Caco-2 (cell line): ENCODE measurements at regions of chr20 and their contacts with region 1.

Region 1: GRCh38 chr20:40689943-40690835 is 1.2 kb upstream of the MAFB start:
- DNase-seq: peak; percentile 92 to 96
- H3K4me3 ChIP-seq: peak overlapping the region; percentile 68
- H3K4me3 Mint-ChIP-seq: peak overlapping the region; percentile 81
- H3K27ac Mint-ChIP-seq: peak overlapping the region; percentile 38
- H3K4me1 ChIP-seq: peaks cover 14% of the 10 kb centered on the region
- H3K4me1 Mint-ChIP-seq: no peaks in the 10 kb centered on the region
- H3K27me3 ChIP-seq: peaks cover 14% of the 10 kb centered on the region
- H3K27me3 Mint-ChIP-seq: peaks cover 47% of the 10 kb centered on the region
- CTCF ChIP-seq: peak; percentile 99

Region 2: DNA sequence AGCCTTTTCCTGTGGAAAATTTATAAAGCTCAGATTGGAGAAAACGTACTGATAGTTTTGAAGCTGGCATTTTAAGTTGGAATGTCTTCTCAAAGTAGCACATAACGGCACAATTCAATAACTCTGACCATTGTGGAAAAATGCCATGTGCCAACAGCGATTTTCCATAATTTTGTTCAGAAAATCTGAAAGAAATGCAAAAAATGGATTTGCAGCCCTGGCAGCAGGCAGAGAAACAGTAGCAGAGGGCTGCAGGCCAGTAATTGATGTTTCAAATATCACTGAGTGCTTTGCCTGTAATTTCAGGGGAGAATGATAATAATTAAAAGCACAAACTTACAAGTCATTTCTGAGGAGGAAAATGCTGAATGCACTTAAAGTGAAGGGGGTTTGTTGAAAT is 508.5 kb before region 1 on chr20:
- CTCF ChIA-PET with region 1: no interaction called
- POLR2A ChIA-PET with region 1: no interaction called
- intact Hi-C with region 1: no loop called
- DNase-seq: no peak
- H3K4me3 ChIP-seq: no peak overlapping the region
- H3K4me3 Mint-ChIP-seq: no peak overlapping the region
- H3K27ac Mint-ChIP-seq: no peak overlapping the region
- H3K4me1 ChIP-seq: no peaks in the 10 kb centered on the region
- H3K4me1 Mint-ChIP-seq: no peaks in the 10 kb centered on the region
- H3K27me3 ChIP-seq: no peaks in the 10 kb centered on the region
- H3K27me3 Mint-ChIP-seq: peaks cover 9% of the 10 kb centered on the region
- CTCF ChIP-seq: no peak

Region 3: DNA sequence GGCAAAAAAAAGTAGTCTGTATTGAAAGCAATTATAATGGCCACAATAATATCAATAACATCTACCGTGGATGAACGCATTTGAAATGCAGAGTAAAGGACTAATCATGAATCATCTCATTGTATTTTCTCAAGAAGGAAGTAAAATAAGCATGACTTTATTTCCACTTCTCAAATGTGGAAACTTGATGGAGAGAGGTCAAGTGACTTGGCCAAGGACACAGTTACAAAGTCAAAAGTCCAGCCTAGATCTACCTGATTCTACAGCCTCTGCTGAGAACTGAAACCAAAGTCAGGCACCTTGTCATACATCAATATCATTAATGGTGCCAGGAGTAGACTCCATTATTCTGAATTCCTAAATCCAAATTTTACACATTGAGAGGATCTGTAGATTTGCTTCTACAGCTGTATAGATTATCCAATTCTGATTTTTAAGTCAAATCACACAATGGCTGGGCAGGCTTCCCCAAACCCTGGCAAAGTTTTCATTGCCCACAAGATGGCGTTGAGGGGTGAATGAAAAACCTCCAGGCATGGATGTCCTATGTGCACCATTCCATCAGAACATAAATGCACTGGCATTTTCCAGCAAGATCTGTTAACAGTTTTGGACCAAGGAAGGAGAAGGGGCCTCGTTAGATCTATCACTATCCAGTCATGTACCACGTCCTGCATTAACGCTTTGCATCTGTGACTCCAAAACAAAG is 424.2 kb before region 1 on chr20:
- CTCF ChIA-PET with region 1: interaction called, 3 read pairs
- POLR2A ChIA-PET with region 1: no interaction called
- intact Hi-C with region 1: loop called (anchors 1 kb)
- DNase-seq: peak in 1 of 2 experiments; percentile 66
- H3K4me3 ChIP-seq: no peak overlapping the region
- H3K4me3 Mint-ChIP-seq: no peak overlapping the region
- H3K27ac Mint-ChIP-seq: no peak overlapping the region
- H3K4me1 ChIP-seq: no peaks in the 10 kb centered on the region
- H3K4me1 Mint-ChIP-seq: no peaks in the 10 kb centered on the region
- H3K27me3 ChIP-seq: peaks cover 2% of the 10 kb centered on the region
- H3K27me3 Mint-ChIP-seq: peaks cover 21% of the 10 kb centered on the region
- CTCF ChIP-seq: peak; percentile 72 to 81

Region 4: GRCh38 chr20:40617594-40617993 is 72.6 kb before region 1 on chr20:
- CTCF ChIA-PET with region 1: no interaction called
- POLR2A ChIA-PET with region 1: no interaction called
- intact Hi-C with region 1: loop called (anchors 1 kb)
- DNase-seq: no peak
- H3K4me3 ChIP-seq: no peak overlapping the region
- H3K4me3 Mint-ChIP-seq: peak overlapping the region; percentile 7
- H3K27ac Mint-ChIP-seq: no peak overlapping the region
- H3K4me1 ChIP-seq: peaks cover 4% of the 10 kb centered on the region; the same call in 1 of the 2 replicates
- H3K4me1 Mint-ChIP-seq: no peaks in the 10 kb centered on the region
- H3K27me3 ChIP-seq: no peaks in the 10 kb centered on the region; the same call in 1 of the 2 replicates
- H3K27me3 Mint-ChIP-seq: peaks cover 14% of the 10 kb centered on the region
- CTCF ChIP-seq: no peak

Region 5: DNA sequence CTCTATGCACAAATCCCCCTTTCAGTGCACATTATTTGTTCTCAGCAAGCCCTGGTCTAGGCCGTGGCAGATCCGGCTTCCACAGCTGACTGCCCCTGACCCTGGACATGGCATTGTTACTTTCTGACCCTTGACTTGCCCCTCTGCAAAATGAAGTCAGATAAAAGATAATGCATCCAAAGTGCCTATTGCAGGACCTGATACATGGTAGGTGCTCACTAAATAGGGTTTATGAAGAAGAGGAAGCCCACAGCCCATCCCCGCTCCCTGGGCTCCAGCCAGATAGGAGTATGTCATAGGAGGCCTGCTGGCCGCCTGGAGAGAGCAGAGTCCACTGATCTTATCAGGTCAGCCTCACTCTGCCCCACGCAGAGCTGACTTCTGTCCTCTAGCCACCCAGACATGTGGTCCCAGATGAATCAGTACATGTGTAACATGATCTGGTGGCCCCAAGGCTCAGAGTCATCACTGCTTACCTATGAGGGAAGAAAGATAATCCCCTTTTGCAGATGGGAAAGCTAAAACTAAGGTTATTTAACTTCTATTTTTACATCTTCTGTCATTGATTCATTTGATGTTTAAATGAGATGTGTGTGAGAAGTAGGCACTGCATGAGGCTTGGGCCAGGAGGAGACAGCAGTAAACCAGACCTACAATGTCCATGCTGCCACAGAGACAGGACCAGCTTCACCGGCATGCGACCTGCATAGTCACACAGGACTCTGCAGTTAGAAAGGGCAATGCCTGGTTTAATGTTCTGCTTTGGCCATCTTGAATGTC is 21.6 kb before region 1 on chr20:
- CTCF ChIA-PET with region 1: interaction called, 10 read pairs
- POLR2A ChIA-PET with region 1: interaction called, 6 read pairs
- intact Hi-C with region 1: loop called (anchors 1 kb)
- DNase-seq: peak; percentile 72 to 90
- H3K4me3 ChIP-seq: no peak overlapping the region
- H3K4me3 Mint-ChIP-seq: no peak overlapping the region
- H3K27ac Mint-ChIP-seq: no peak overlapping the region
- H3K4me1 ChIP-seq: peaks cover 32% of the 10 kb centered on the region
- H3K4me1 Mint-ChIP-seq: peaks cover 6% of the 10 kb centered on the region
- H3K27me3 ChIP-seq: no peaks in the 10 kb centered on the region
- H3K27me3 Mint-ChIP-seq: no peaks in the 10 kb centered on the region
- CTCF ChIP-seq: no peak

Region 6: DNA sequence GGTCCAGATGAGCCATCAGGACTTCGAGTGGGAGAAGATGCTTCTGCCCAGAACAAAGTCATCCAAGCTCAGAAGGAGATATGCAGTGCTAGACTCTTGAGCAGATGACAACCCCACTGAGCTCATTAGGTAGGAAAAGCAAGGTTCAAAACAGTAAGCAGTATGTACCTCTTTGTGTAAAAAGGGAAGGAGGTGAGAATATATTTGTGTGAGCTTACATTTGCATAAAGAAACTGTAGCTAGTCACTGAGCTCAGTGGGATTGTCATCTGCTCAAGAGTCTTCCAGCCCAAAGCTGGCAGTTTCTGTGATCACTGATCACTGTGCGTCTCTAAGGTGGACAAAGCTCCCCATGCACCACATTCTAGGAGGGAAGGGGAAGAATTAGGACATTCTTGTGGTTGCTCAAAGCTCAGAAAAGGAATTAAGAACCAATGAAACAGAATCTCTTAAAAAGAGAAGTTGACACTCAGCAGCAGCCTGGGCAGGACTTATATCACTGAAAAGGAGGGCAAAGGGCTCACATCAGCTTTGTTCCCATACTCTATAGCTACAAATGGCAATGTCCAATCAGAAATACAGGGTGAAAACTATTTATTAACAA is 88.8 kb after region 1 on chr20:
- CTCF ChIA-PET with region 1: no interaction called
- POLR2A ChIA-PET with region 1: no interaction called
- intact Hi-C with region 1: no loop called
- DNase-seq: no peak
- H3K4me3 ChIP-seq: no peak overlapping the region
- H3K4me3 Mint-ChIP-seq: no peak overlapping the region
- H3K27ac Mint-ChIP-seq: no peak overlapping the region
- H3K4me1 ChIP-seq: no peaks in the 10 kb centered on the region
- H3K4me1 Mint-ChIP-seq: no peaks in the 10 kb centered on the region
- H3K27me3 ChIP-seq: peaks cover 4% of the 10 kb centered on the region
- H3K27me3 Mint-ChIP-seq: peaks cover 14% of the 10 kb centered on the region
- CTCF ChIP-seq: no peak